ENCODE measurements at regions of chr7 and their contacts with region 1.

Region 1: DNA sequence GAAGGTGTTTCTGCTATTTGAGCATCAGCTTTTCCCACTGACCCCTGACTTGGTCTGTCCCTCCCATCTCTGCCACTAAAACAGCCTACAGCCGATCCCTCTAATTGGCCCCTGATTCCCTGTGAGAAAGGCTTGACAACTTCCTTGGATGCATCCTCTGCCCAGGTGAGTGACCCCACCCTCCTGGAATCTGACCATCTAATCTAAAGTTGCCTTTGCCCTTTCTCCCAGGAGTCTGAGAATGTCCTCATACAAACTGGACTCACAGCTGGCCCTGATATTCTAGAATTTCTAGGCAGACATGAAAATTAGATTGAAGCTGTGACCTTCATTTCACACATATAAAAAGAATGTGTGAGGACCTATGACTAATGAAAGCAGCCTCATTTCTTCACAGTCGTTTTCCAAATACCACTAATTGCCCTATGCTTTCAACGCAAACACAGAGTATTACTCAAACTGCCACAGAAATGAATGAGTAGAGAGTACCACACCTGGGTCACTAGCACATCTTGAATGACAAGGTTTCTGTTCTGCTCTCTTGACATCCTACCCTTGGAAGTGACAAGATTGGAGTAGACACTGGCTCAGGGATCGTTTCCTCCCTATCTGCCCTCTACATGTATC is 142.2 kb downstream of the C1GALT1 start:
- DNase-seq: no peak
- ATAC-seq: no peak
- H3K4me3 ChIP-seq: no peak overlapping the region
- H3K4me3 Mint-ChIP-seq: no peak overlapping the region
- H3K27ac ChIP-seq: no peak overlapping the region
- H3K27ac Mint-ChIP-seq: no peak overlapping the region
- H3K4me1 ChIP-seq: no peaks in the 10 kb centered on the region
- H3K4me1 Mint-ChIP-seq: peaks cover 0 to 3% (median 0%) of the 10 kb centered on the region in 3 donors
- H3K27me3 ChIP-seq: peaks cover 0 to 3% of the 10 kb centered on the region in 2 experiments
- H3K27me3 Mint-ChIP-seq: peaks cover 0 to 9% of the 10 kb centered on the region in 2 donors

Region 2: DNA sequence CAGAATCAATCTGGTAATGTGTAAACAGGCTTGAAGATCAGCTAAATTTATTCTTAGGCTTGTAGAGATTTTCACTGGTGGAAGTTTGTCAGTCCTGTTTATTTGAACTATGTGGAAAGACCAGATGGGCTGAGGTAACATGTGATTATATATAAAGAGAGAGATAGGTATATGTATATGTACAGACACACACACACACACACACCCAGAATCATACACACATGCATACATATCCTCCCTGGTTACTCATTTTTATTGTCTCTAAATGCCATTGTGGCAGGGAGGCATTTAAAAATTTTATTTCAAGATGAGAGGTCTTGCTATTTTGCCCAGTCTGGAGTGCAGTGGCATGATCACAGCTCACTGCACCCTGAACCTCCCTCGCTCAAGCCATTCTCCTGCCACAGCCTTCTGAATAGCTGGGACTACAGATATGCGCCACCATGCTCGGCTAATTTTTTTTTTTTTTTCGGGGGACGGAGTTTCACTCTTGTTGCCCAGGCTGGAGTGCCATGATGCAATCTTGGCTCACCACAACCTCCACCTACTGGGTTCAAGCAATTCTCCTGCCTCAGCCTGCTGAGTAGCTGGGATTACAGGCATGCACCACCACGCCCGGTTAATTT is 974.0 kb before region 1 on chr7:
- CTCF ChIA-PET with region 1: no interaction called
- POLR2A ChIA-PET with region 1: no interaction called
- DNase-seq: no peak
- ATAC-seq: no peak
- H3K4me3 ChIP-seq: no peak overlapping the region
- H3K4me3 Mint-ChIP-seq: no peak overlapping the region
- H3K27ac ChIP-seq: no peak overlapping the region
- H3K27ac Mint-ChIP-seq: peak overlapping the region in 1 of 2 donors; percentile 28
- H3K4me1 ChIP-seq: peaks cover 2 to 15% of the 10 kb centered on the region in 2 experiments
- H3K4me1 Mint-ChIP-seq: peaks cover 6 to 13% (median 11%) of the 10 kb centered on the region in 3 donors
- H3K27me3 ChIP-seq: peaks cover 0 to 8% of the 10 kb centered on the region in 2 experiments
- H3K27me3 Mint-ChIP-seq: peaks cover 4 to 5% of the 10 kb centered on the region in 2 donors

Region 3: GRCh38 chr7:7292085-7292484 is 32.5 kb before region 1 on chr7:
- CTCF ChIA-PET with region 1: interaction called in 1 of 2 experiments, 15 read pairs
- POLR2A ChIA-PET with region 1: no interaction called
- DNase-seq: no peak
- ATAC-seq: no peak
- H3K4me3 ChIP-seq: no peak overlapping the region
- H3K4me3 Mint-ChIP-seq: no peak overlapping the region
- H3K27ac ChIP-seq: no peak overlapping the region
- H3K27ac Mint-ChIP-seq: no peak overlapping the region
- H3K4me1 ChIP-seq: no peaks in the 10 kb centered on the region
- H3K4me1 Mint-ChIP-seq: peaks cover 0 to 7% (median 2%) of the 10 kb centered on the region in 3 donors
- H3K27me3 ChIP-seq: peaks cover 0 to 4% of the 10 kb centered on the region in 2 experiments
- H3K27me3 Mint-ChIP-seq: peaks cover 0 to 2% of the 10 kb centered on the region in 2 donors

Region 4: DNA sequence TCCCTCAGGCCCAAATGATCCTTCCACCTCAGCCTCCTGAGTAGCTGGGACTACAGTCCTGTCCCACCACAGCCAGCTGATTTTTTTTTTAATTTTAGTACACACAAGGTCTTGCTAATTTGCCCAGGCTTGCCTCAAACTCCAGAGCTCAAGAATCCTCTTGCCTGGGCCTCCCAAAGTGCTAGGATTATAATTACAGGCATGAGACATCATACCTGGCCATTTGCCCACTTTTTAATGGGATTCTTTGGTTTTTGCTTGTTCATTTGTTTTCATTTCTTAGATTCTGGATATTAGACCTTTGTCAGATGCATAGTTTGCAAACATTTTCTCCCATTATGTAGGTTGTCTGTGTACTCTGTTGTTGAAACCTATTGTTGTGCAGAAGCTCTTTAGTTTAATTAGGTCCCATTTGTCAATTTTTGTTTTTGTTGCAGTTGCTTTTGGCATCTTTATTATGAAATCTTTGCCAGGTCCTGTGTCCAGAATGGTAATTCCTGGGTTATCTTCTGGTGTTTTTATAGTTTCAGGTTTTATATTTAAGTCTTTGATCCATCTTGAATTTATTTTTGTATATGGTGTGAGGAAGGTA is 739.2 kb after region 1 on chr7:
- CTCF ChIA-PET with region 1: no interaction called
- POLR2A ChIA-PET with region 1: no interaction called
- DNase-seq: no peak
- ATAC-seq: no peak
- H3K4me3 ChIP-seq: no peak overlapping the region
- H3K4me3 Mint-ChIP-seq: no peak overlapping the region
- H3K27ac ChIP-seq: no peak overlapping the region
- H3K27ac Mint-ChIP-seq: peak overlapping the region in 1 of 2 donors; percentile 34
- H3K4me1 ChIP-seq: peaks cover 0 to 3% of the 10 kb centered on the region in 2 experiments
- H3K4me1 Mint-ChIP-seq: peaks cover 34 to 54% (median 45%) of the 10 kb centered on the region in 3 donors
- H3K27me3 ChIP-seq: no peaks in the 10 kb centered on the region
- H3K27me3 Mint-ChIP-seq: no peaks in the 10 kb centered on the region